ENCODE measurements at regions of chr5 and their contacts with region 1.

Region 1: GRCh38 chr5:131533836-131534235 is 101.2 kb downstream of the RAPGEF6 start:
- DNase-seq: no peak
- ATAC-seq: no peak
- H3K4me3 ChIP-seq: no peak overlapping the region
- H3K27ac ChIP-seq: no peak overlapping the region
- H3K4me1 ChIP-seq: peaks cover 12% of the 10 kb centered on the region
- H3K27me3 ChIP-seq: no peaks in the 10 kb centered on the region
- CTCF ChIP-seq: peak in 1 of 3 experiments; percentile 31; a peak in 1 of 6 replicates
- EP300 ChIP-seq: no peak
- POLR2A ChIP-seq: no peak
- RAD21 ChIP-seq: peak; percentile 15; the same call in 1 of the 2 replicates

Region 2: DNA sequence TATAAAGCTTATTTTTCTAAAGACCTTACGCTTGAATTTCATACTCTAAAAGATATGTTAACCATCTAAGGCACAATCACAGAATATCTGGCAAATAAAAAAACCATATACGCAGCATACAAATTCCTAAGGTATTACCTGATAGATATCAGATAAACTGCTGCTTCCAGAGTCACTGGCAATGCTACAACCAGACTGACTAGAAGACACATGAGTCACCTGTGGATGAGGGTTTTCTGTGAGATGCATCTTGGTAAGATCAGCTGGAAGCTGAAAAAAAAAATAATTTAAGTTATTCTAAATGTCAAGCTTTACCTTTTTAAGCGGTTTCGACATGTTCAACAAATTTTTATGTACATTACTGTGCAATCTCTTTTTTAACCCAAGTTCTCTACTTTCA is 12.6 kb before region 1 on chr5:
- CTCF ChIA-PET with region 1: interaction called, 10 read pairs
- POLR2A ChIA-PET with region 1: interaction called, 7 read pairs
- RAD21 ChIA-PET with region 1: interaction called, 3 read pairs
- SMC1A ChIA-PET with region 1: interaction called, 11 read pairs
- in situ Hi-C with region 1: no loop called
- intact Hi-C with region 1: no loop called
- DNase-seq: no peak
- ATAC-seq: no peak
- H3K4me3 ChIP-seq: no peak overlapping the region
- H3K27ac ChIP-seq: no peak overlapping the region
- H3K4me1 ChIP-seq: no peaks in the 10 kb centered on the region; the same call in 1 of the 2 replicates
- H3K27me3 ChIP-seq: no peaks in the 10 kb centered on the region
- CTCF ChIP-seq: no peak
- EP300 ChIP-seq: no peak
- POLR2A ChIP-seq: no peak
- RAD21 ChIP-seq: no peak